HepG2 (cell line): ENCODE measurements at regions of chr12 and their contacts with region 1.

Region 1: GRCh38 chr12:57111031-57111734 is at the start of gene STAT6:
- DNase-seq: peak; percentile 71
- ATAC-seq: peak; percentile 66
- H3K4me3 ChIP-seq: peak within 1 kb of the TSS; percentile 72 to 91 (median 87)
- H3K27ac ChIP-seq: peak within 1 kb of the TSS; percentile 82
- H3K4me1 ChIP-seq: peaks cover 46% of the 10 kb centered on the region
- H3K27me3 ChIP-seq: no peaks in the 10 kb centered on the region; a peak in 1 of 5 replicates
- CTCF ChIP-seq: no peak
- EP300 ChIP-seq: no peak; a peak in 1 of 4 replicates
- POLR2A ChIP-seq: peak in 1 of 2 experiments; percentile 55; a peak in 1 of 4 replicates
- RAD21 ChIP-seq: no peak
- total RNA-seq, gene STAT6: 19.4 and 28.0 TPM in 2 replicates

Region 2: DNA sequence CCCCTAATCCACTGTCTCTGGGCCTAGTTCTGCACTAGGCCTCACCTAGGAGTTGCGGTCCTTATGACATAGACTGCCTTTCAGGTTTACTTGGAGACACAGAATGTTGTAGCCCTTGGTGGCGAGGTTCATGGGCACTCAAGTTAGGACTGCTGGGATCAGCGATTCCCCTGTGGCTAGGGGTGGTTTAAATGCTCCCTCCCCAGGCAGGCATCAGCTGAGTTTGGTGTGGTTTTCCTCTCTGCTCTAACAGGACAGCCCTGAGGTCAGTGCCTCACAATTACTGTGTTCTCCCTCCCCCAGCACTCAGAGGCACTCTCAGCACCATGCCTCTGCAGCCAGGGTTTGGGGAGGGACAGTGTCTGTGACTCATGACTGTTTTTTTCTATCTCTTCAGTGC is 131.6 kb before region 1 on chr12:
- CTCF ChIA-PET with region 1: no interaction called
- POLR2A ChIA-PET with region 1: no interaction called
- in situ Hi-C with region 1: no loop called
- intact Hi-C with region 1: no loop called
- DNase-seq: no peak
- ATAC-seq: no peak
- H3K4me3 ChIP-seq: no peak overlapping the region
- H3K27ac ChIP-seq: no peak overlapping the region
- H3K4me1 ChIP-seq: no peaks in the 10 kb centered on the region
- H3K27me3 ChIP-seq: no peaks in the 10 kb centered on the region; a peak in 2 of 5 replicates
- CTCF ChIP-seq: no peak
- EP300 ChIP-seq: no peak
- POLR2A ChIP-seq: no peak
- RAD21 ChIP-seq: no peak

Region 3: DNA sequence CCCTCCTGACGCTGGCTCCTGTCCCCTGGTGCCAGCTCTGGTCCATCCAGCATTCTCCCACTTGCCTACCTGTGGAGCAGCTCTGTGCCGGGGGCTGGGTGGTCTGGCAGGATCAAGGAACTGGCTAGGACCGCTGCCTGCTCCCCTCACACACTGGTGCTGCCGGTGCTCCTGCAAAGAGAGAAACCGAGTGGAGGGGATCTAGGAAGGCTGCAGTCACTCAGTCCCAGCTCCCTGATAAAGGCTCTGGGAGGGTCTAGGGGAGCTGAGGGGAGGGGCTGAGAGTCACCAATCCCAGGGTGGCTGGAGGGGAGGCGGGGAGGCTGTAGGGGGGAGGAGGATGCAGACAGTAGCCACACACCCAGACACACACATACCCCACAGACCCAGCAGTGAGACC is 94.9 kb before region 1 on chr12 and contains the start of gene TAC3:
- CTCF ChIA-PET with region 1: no interaction called
- POLR2A ChIA-PET with region 1: interaction called, 23 read pairs
- in situ Hi-C with region 1: no loop called
- intact Hi-C with region 1: no loop called
- DNase-seq: no peak
- ATAC-seq: peak; percentile 55
- H3K4me3 ChIP-seq: no peak within 1 kb of the TSS
- H3K27ac ChIP-seq: no peak within 1 kb of the TSS
- H3K4me1 ChIP-seq: peaks cover 31% of the 10 kb centered on the region
- H3K27me3 ChIP-seq: peaks cover 3 to 44% of the 10 kb centered on the region in 2 experiments; a peak in 4 of 5 replicates
- CTCF ChIP-seq: no peak
- EP300 ChIP-seq: no peak
- POLR2A ChIP-seq: no peak
- RAD21 ChIP-seq: no peak
- total RNA-seq, gene TAC3: 0.15 TPM in 1 of 2 replicates, not detected in the other

Region 4: DNA sequence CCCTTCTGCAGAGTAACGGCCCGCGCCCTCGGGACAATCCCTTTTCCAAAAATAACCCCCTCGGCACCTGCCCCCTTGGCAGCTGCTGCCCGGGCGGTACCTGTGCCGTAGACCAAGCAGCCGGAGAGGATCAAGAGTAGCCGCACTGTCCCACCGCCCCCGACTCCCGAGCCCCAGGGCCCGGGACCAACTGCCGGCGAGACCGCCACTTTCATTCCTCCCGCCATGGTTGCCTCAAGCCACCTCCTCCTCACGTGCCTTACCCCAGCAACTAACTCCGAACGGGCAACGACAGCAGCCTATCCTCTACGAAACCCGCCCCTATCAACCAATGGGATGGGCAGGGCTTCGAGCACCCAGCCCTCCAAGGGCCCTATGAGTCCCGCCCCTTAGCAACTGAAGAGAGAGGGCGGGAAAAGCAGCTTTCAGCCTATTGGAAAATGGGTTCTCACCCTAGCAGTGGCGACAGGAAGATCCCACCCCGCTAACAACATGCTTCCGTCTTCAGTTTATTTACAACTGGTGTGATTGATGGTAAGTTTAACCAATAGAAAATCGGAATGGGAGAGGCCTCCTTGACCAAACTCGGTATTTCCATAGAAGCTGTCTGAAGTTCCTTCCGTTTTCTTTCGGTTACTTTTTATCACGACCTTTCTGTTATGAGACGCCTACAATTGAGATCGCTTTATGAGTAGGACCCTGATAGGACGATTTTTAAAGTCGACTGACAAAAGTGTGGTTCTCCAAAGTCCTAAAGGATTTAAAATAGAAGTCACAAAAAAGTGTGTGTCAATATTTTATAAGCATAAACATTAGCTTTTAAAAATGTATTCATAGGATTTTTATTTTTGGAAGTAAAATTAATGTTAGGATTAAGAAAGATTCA is 32.4 kb before region 1 on chr12 and contains the start of gene NEMP1:
- CTCF ChIA-PET with region 1: no interaction called
- POLR2A ChIA-PET with region 1: interaction called, 132 read pairs
- in situ Hi-C with region 1: loop called (anchors 5 kb)
- intact Hi-C with region 1: no loop called
- DNase-seq: peak; percentile 100
- ATAC-seq: peak; percentile 99
- H3K4me3 ChIP-seq: peak within 1 kb of the TSS; percentile 86 to 91 (median 87)
- H3K27ac ChIP-seq: peak within 1 kb of the TSS; percentile 69
- H3K4me1 ChIP-seq: peaks cover 8% of the 10 kb centered on the region
- H3K27me3 ChIP-seq: no peaks in the 10 kb centered on the region
- CTCF ChIP-seq: no peak
- EP300 ChIP-seq: peak in 1 of 2 experiments; percentile 24; a peak in 1 of 4 replicates
- POLR2A ChIP-seq: peak; percentile 70 to 74
- RAD21 ChIP-seq: 0 out of 2 replicates have a peak, but pooled peaks have one; percentile 17
- total RNA-seq, gene NEMP1: 8.3 and 12.9 TPM in 2 replicates

Region 5: GRCh38 chr12:57129889-57130288 is 18.7 kb after region 1 on chr12:
- CTCF ChIA-PET with region 1: no interaction called
- POLR2A ChIA-PET with region 1: interaction called, 90 read pairs
- in situ Hi-C with region 1: no loop called
- intact Hi-C with region 1: no loop called
- DNase-seq: no peak
- ATAC-seq: no peak
- H3K4me3 ChIP-seq: peak overlapping the region; percentile 87 to 96 (median 88)
- H3K27ac ChIP-seq: peak overlapping the region; percentile 40
- H3K4me1 ChIP-seq: peaks cover 63% of the 10 kb centered on the region
- H3K27me3 ChIP-seq: no peaks in the 10 kb centered on the region; a peak in 1 of 5 replicates
- CTCF ChIP-seq: no peak
- EP300 ChIP-seq: no peak
- POLR2A ChIP-seq: no peak
- RAD21 ChIP-seq: no peak

Region 6: DNA sequence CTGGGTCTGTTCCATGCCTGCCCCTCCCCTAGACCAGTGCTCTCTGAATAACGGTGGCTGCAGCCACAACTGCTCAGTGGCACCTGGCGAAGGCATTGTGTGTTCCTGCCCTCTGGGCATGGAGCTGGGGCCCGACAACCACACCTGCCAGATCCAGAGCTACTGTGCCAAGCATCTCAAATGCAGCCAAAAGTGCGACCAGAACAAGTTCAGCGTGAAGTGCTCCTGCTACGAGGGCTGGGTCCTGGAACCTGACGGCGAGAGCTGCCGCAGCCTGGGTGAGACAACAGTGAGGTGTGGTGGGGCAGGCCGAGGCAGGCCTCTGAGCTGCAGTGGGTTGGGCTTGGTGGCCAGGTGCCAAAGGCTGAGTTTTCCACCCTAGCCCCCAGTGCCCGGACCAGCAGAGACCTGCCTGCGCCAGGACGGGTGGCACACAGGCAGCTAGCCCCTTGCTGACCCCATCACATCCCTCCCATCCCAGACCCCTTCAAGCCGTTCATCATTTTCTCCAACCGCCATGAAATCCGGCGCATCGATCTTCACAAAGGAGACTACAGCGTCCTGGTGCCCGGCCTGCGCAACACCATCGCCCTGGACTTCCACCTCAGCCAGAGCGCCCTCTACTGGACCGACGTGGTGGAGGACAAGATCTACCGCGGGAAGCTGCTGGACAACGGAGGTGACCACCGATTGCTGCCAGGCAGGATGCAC is 64.4 kb after region 1 on chr12:
- CTCF ChIA-PET with region 1: no interaction called
- POLR2A ChIA-PET with region 1: interaction called, 12 read pairs
- in situ Hi-C with region 1: no loop called
- intact Hi-C with region 1: no loop called
- DNase-seq: peak; percentile 39
- ATAC-seq: peak; percentile 19
- H3K4me3 ChIP-seq: no peak overlapping the region
- H3K27ac ChIP-seq: no peak overlapping the region
- H3K4me1 ChIP-seq: 0 out of 2 replicates have a peak, but pooled peaks cover 5% of the 10 kb centered on the region
- H3K27me3 ChIP-seq: no peaks in the 10 kb centered on the region
- CTCF ChIP-seq: peak; percentile 83
- EP300 ChIP-seq: no peak
- POLR2A ChIP-seq: peak in 1 of 2 experiments; percentile 38; a peak in 1 of 4 replicates
- RAD21 ChIP-seq: peak; percentile 65